Heart right ventricle (tissue), 16 donors: ENCODE measurements at regions of chr17 and their contacts with region 1.

Region 1: GRCh38 chr17:57261084-57261461 is 4.8 kb downstream of the MSI2 start:
- DNase-seq: no peak
- ATAC-seq: no peak
- H3K4me3 ChIP-seq: no peak overlapping the region
- H3K27ac ChIP-seq: no peak overlapping the region
- H3K4me1 ChIP-seq: peaks cover 0 to 44% (median 24%) of the 10 kb centered on the region in 9 donors
- H3K27me3 ChIP-seq: no peaks in the 10 kb centered on the region
- CTCF ChIP-seq: no peak

Region 2: GRCh38 chr17:57319806-57320205 is 58.7 kb after region 1 on chr17:
- intact Hi-C with region 1: loop called in 2 of 10 experiments (anchors 5 to 10 kb)
- DNase-seq: no peak
- ATAC-seq: no peak
- H3K4me3 ChIP-seq: no peak overlapping the region
- H3K27ac ChIP-seq: no peak overlapping the region
- H3K4me1 ChIP-seq: peaks cover 0 to 16% (median 0%) of the 10 kb centered on the region in 9 donors
- H3K27me3 ChIP-seq: no peaks in the 10 kb centered on the region
- CTCF ChIP-seq: no peak

Region 3: GRCh38 chr17:57432520-57433277 is 171.6 kb after region 1 on chr17:
- intact Hi-C with region 1: loop called in 2 of 10 experiments (anchors 10 kb)
- DNase-seq: no peak
- ATAC-seq: no peak
- H3K4me3 ChIP-seq: no peak overlapping the region
- H3K27ac ChIP-seq: no peak overlapping the region
- H3K4me1 ChIP-seq: peaks cover 0 to 13% (median 1%) of the 10 kb centered on the region in 9 donors
- H3K27me3 ChIP-seq: no peaks in the 10 kb centered on the region
- CTCF ChIP-seq: peak in 1 of 9 donors; percentile 10